ENCODE measurements at regions of chr14 and their contacts with region 1.

Region 1: GRCh38 chr14:93120517-93120916 is 4.8 kb upstream of the ITPK1 start:
- DNase-seq: no peak
- ATAC-seq: no peak
- H3K4me3 ChIP-seq: no peak overlapping the region
- H3K4me3 Mint-ChIP-seq: no peak overlapping the region
- H3K27ac ChIP-seq: no peak overlapping the region
- H3K27ac Mint-ChIP-seq: no peak overlapping the region
- H3K4me1 ChIP-seq: peaks cover 6 to 8% of the 10 kb centered on the region in 2 donors
- H3K4me1 Mint-ChIP-seq: peaks cover 7% of the 10 kb centered on the region
- H3K27me3 ChIP-seq: no peaks in the 10 kb centered on the region
- H3K27me3 Mint-ChIP-seq: no peaks in the 10 kb centered on the region
- CTCF ChIP-seq: no peak

Region 2: GRCh38 chr14:93132470-93133065 is 12.1 kb after region 1 on chr14:
- CTCF ChIA-PET with region 1: interaction called, 78 read pairs
- POLR2A ChIA-PET with region 1: no interaction called
- intact Hi-C with region 1: no loop called
- DNase-seq: peak; percentile 46
- ATAC-seq: peak; percentile 54
- H3K4me3 ChIP-seq: no peak overlapping the region
- H3K4me3 Mint-ChIP-seq: no peak overlapping the region
- H3K27ac ChIP-seq: no peak overlapping the region
- H3K27ac Mint-ChIP-seq: no peak overlapping the region
- H3K4me1 ChIP-seq: no peaks in the 10 kb centered on the region
- H3K4me1 Mint-ChIP-seq: no peaks in the 10 kb centered on the region
- H3K27me3 ChIP-seq: peaks cover 0 to 4% (median 0%) of the 10 kb centered on the region in 4 experiments
- H3K27me3 Mint-ChIP-seq: no peaks in the 10 kb centered on the region
- CTCF ChIP-seq: peak; percentile 38

Region 3: GRCh38 chr14:93476305-93476704 is 355.8 kb after region 1 on chr14:
- CTCF ChIA-PET with region 1: no interaction called
- POLR2A ChIA-PET with region 1: no interaction called
- intact Hi-C with region 1: no loop called
- DNase-seq: no peak
- ATAC-seq: no peak
- H3K4me3 ChIP-seq: no peak overlapping the region
- H3K4me3 Mint-ChIP-seq: no peak overlapping the region
- H3K27ac ChIP-seq: no peak overlapping the region
- H3K27ac Mint-ChIP-seq: no peak overlapping the region
- H3K4me1 ChIP-seq: no peaks in the 10 kb centered on the region
- H3K4me1 Mint-ChIP-seq: no peaks in the 10 kb centered on the region
- H3K27me3 ChIP-seq: peaks cover 0 to 2% (median 0%) of the 10 kb centered on the region in 4 experiments
- H3K27me3 Mint-ChIP-seq: peaks cover 17% of the 10 kb centered on the region
- CTCF ChIP-seq: no peak

Measured in B cell (primary cell).